ENCODE measurements at regions of chr5 and their contacts with region 1.

Region 1: DNA sequence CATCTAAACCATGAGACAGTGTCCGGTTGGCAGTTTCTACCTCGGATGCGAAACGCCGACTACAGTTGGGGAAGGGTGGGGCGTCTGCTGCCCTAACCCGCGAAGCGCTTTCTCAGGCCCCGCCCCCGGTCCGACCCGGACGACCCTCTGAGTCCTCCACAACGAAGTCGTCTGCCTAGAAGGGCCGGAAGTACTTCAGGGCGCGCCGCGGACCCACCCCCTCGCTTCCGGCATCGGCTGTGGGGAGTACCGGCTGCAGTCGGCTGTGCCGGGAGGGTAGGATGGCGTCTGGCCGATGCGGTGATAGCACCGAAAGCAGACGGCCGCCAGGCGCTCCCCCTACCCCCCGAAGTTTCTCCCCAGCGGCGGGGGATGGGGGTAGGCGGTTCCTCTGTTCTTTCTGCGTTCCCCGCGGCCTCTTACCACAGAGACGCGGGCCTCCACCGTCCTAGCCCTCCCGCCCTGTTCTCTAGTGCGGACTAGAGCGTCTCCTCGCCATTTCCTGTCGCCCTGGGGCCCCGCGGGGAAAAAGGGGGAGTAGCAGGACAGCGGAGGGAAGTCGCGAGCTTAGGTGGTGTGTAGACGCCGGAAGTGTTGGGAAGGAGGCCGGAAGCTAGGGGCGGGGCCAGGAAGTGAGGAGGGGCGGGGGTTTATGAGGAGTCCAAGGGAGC is at the start of gene TRIM41:
- DNase-seq: peak; percentile 81 to 99 (median 86)
- ATAC-seq: peak; percentile 79
- H3K4me3 ChIP-seq: peak within 1 kb of the TSS; percentile 86
- H3K27ac ChIP-seq: peak within 1 kb of the TSS; percentile 90
- H3K4me1 ChIP-seq: peaks cover 0 to 42% of the 10 kb centered on the region in 2 experiments; a peak in 4 of 5 replicates
- H3K27me3 ChIP-seq: no peaks in the 10 kb centered on the region
- CTCF ChIP-seq: peak; percentile 7 to 44 (median 29); a peak in 3 of 6 replicates
- EP300 ChIP-seq: peak; percentile 63; the same call in 1 of the 2 replicates
- POLR2A ChIP-seq: peak; percentile 98
- RAD21 ChIP-seq: no peak
- polyA plus RNA-seq, gene TRIM41: 1.8 to 2.1 TPM

Region 2: GRCh38 chr5:181207214-181208107 is 15.7 kb before region 1 on chr5:
- CTCF ChIA-PET with region 1: no interaction called
- POLR2A ChIA-PET with region 1: interaction called, 6 read pairs
- in situ Hi-C with region 1: no loop called
- intact Hi-C with region 1: loop called (anchors 1 kb)
- DNase-seq: peak in 3 of 4 experiments; percentile 36 to 94 (median 71)
- ATAC-seq: peak; percentile 53
- H3K4me3 ChIP-seq: peak overlapping the region; percentile 65
- H3K27ac ChIP-seq: peak overlapping the region; percentile 72
- H3K4me1 ChIP-seq: peaks cover 29 to 35% of the 10 kb centered on the region in 2 experiments; a peak in 4 of 5 replicates
- H3K27me3 ChIP-seq: no peaks in the 10 kb centered on the region
- CTCF ChIP-seq: no peak
- EP300 ChIP-seq: peak; percentile 76
- POLR2A ChIP-seq: 0 out of 2 replicates have a peak, but pooled peaks have one; percentile 35
- RAD21 ChIP-seq: no peak; a peak in 1 of 4 replicates

Region 3: DNA sequence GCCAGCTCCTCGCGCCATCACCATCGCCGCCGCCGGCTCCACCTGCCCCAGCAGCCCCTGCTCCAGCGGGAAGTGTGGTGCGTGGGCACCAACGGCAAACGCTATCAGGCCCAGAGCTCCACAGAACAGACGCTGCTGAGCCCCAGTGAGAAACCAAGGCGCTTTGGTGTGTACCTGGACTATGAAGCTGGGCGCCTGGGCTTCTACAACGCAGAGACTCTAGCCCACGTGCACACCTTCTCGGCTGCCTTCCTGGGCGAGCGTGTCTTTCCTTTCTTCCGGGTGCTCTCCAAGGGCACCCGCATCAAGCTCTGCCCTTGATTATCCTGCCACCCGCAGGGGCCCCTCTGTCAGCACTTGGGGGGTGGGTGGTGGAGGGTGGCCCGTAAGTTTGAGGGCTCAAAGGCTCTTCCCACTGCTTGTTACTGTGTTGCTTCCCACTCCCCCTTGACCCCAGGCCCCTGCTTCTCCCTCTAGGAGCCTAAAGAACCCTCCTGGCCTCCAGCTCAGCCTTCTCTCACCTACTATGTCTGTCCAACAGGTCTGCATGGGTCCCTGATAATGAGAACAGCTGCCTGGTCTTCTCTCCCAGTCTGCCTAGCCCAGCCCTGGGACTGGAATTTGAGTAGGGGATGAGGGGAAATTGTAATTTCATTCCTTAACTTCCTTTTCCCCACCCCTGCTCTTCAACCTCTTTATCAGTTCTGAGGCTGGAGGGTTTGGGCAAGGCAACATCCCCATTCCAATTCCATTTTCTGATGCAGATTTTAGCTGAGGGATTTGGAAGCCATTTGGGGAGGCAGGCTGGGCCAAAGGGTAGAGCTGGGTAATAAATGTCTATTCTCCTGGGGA is 11.5 kb after region 1 on chr5:
- CTCF ChIA-PET with region 1: no interaction called
- POLR2A ChIA-PET with region 1: interaction called, 55 read pairs
- in situ Hi-C with region 1: no loop called
- intact Hi-C with region 1: no loop called
- DNase-seq: peak in 3 of 4 experiments; percentile 17 to 38 (median 21)
- ATAC-seq: peak; percentile 42
- H3K4me3 ChIP-seq: no peak overlapping the region
- H3K27ac ChIP-seq: peak overlapping the region; percentile 60; the same call in 2 of the 3 replicates
- H3K4me1 ChIP-seq: peaks cover 5 to 20% of the 10 kb centered on the region in 2 experiments; a peak in 4 of 5 replicates
- H3K27me3 ChIP-seq: no peaks in the 10 kb centered on the region
- CTCF ChIP-seq: no peak
- EP300 ChIP-seq: no peak
- POLR2A ChIP-seq: peak; percentile 72
- RAD21 ChIP-seq: no peak

Region 4: DNA sequence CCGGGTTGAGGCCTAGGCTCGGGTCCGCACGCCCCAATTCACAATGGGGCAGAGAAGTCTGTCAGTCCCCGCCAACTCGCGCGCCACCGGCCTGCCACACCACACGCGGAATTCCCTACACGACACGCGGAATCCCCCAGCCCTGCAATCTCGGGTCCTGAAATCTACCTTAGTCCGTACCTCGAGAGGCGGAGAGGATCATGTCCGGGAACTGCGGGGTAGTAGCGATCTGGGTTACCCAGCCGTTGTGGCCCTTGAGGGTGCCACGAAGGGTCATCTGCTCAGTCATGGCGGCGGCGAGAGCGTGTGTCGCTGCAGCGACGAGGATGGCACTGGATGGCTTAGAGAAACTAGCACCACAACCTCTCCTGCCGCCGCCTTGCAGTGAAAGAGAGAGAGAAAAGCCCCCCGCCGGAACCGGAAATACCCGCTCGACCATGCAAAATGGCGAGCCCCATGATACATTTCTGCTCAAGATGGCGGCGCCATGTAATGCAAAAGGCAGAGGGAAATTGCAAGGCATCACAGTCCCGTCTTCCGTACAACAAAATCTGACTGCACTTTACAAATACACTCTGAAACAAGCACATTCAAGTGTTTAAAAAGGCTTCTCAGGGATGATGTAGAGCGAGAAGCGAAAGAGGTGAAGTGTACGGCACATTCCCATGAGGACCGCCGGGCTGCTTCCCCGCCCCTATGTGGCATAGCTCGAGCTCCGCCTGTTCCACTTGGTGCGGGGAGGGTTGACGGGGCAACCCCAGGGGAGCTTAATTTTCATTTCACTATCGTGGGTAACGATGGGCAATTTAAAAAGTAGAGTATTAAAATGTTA is 20.5 kb after region 1 on chr5 and contains the start of gene RACK1:
- CTCF ChIA-PET with region 1: interaction called, 3 read pairs
- POLR2A ChIA-PET with region 1: interaction called, 8 read pairs
- in situ Hi-C with region 1: no loop called
- intact Hi-C with region 1: loop called (anchors 1 kb)
- DNase-seq: peak; percentile 65 to 94 (median 78)
- ATAC-seq: peak; percentile 67
- H3K4me3 ChIP-seq: peak within 1 kb of the TSS; percentile 94
- H3K27ac ChIP-seq: peak within 1 kb of the TSS; percentile 99
- H3K4me1 ChIP-seq: peaks cover 31 to 47% of the 10 kb centered on the region in 2 experiments; a peak in 4 of 5 replicates
- H3K27me3 ChIP-seq: no peaks in the 10 kb centered on the region
- CTCF ChIP-seq: no peak
- EP300 ChIP-seq: peak; percentile 27; the same call in 1 of the 2 replicates
- POLR2A ChIP-seq: peak; percentile 99
- RAD21 ChIP-seq: no peak
- polyA plus RNA-seq, gene RACK1: 3,894 to 5,311 TPM

Measured in K562 (cell line).